Panc1 (cell line): ENCODE measurements at regions of chr14 and their contacts with region 1.

Region 1: GRCh38 chr14:36647824-36648753 is 13.6 kb upstream of the PAX9 start:
- DNase-seq: no peak
- ATAC-seq: peak; percentile 94
- H3K4me3 ChIP-seq: peak overlapping the region; percentile 37 to 54
- H3K27ac ChIP-seq: no peak overlapping the region
- H3K4me1 ChIP-seq: no peaks in the 10 kb centered on the region
- H3K27me3 ChIP-seq: peaks cover 4% of the 10 kb centered on the region
- CTCF ChIP-seq: peak; percentile 73

Region 2: GRCh38 chr14:36505181-36505815 is 142.8 kb before region 1 on chr14:
- CTCF ChIA-PET with region 1: no interaction called
- POLR2A ChIA-PET with region 1: no interaction called
- in situ Hi-C with region 1: no loop called
- intact Hi-C with region 1: no loop called
- DNase-seq: no peak
- ATAC-seq: no peak
- H3K4me3 ChIP-seq: no peak overlapping the region
- H3K27ac ChIP-seq: no peak overlapping the region
- H3K4me1 ChIP-seq: no peaks in the 10 kb centered on the region
- H3K27me3 ChIP-seq: peaks cover 7% of the 10 kb centered on the region
- CTCF ChIP-seq: no peak

Region 3: GRCh38 chr14:36661756-36662498 is 13.8 kb after region 1 on chr14 and contains the start of gene PAX9:
- CTCF ChIA-PET with region 1: no interaction called
- POLR2A ChIA-PET with region 1: no interaction called
- in situ Hi-C with region 1: no loop called
- intact Hi-C with region 1: no loop called
- DNase-seq: peak; percentile 74
- ATAC-seq: peak; percentile 99
- H3K4me3 ChIP-seq: peak within 1 kb of the TSS; percentile 54 to 69
- H3K27ac ChIP-seq: no peak within 1 kb of the TSS
- H3K4me1 ChIP-seq: no peaks in the 10 kb centered on the region
- H3K27me3 ChIP-seq: no peaks in the 10 kb centered on the region
- CTCF ChIP-seq: no peak
- total RNA-seq, gene PAX9: 0.82 TPM

Region 4: DNA sequence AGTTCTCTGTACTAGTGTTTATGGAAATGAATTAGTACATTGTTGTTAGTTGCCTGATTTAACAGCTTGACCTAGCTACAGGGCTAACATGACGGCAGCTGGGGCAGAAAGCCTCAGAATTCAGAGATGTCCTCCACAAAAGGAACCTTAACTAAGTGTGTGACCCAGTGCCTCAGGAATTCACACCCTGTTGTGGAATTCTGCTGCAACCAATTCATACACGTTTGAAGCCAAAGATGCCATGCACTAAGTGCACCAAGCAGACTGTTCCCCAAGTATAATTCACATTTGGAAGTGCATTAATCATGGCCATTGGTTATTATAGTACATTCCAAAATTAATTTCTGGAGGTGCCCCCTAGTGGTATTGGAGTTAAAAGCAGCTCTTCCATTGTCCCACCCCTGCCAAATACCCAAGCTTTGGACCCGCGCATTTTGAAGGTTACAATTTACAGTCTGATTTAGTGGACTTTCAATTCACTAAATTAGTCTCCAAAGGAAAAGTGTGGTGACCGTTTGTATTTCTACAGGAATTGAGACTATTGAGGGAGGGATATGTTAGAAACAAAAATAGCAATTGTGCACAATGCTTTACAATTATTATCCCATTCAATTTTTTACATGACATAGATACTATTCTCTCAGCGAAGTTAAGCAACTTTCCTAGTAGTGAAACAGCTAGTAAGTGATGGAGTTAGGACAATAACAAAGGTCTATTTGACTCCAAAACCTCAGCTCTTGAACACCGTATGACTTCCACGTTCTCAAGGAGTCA is 99.5 kb after region 1 on chr14:
- CTCF ChIA-PET with region 1: no interaction called
- POLR2A ChIA-PET with region 1: no interaction called
- in situ Hi-C with region 1: no loop called
- intact Hi-C with region 1: loop called (anchors 10 kb)
- DNase-seq: no peak
- ATAC-seq: 0 out of 2 replicates have a peak, but pooled peaks have one; percentile 51
- H3K4me3 ChIP-seq: no peak overlapping the region
- H3K27ac ChIP-seq: no peak overlapping the region
- H3K4me1 ChIP-seq: no peaks in the 10 kb centered on the region
- H3K27me3 ChIP-seq: no peaks in the 10 kb centered on the region
- CTCF ChIP-seq: peak; percentile 73

Region 5: DNA sequence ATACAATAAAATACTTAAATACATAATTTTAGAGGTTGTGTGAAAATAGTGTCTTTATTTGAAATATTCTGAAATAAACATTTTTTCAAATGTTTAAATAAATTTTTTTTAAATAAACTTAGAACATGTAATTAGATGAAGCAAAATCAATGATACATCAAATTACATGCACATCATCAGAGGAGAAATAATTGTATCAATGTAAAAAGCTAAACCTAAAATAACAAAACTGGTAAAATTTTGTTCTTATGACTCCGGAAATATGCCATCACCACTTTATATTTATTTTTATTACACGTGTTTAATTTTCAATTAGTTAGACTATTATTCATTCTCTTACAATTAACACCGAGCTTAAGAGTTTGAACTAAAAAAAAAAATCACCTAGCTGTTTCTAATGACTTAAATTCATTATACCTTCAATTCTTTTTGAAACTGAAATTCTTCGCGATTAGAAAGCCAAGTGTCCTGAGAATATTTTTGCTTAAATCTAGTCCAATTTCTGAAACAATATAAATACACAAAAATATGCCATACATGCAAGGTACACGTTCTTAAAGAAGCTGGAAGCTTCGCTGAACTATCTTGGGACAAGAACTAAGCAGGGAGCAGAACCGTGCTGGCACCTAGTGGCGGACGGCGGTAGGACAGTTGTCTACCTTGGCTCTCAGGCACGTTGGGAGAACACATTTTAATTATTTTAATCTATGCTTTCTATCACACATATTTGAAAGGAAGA is 293.9 kb after region 1 on chr14:
- CTCF ChIA-PET with region 1: interaction called, 6 read pairs
- POLR2A ChIA-PET with region 1: no interaction called
- in situ Hi-C with region 1: no loop called
- intact Hi-C with region 1: loop called (anchors 2 kb)
- DNase-seq: peak; percentile 64
- ATAC-seq: peak; percentile 87
- H3K4me3 ChIP-seq: no peak overlapping the region
- H3K27ac ChIP-seq: no peak overlapping the region
- H3K4me1 ChIP-seq: no peaks in the 10 kb centered on the region
- H3K27me3 ChIP-seq: no peaks in the 10 kb centered on the region
- CTCF ChIP-seq: peak; percentile 93

Region 6: GRCh38 chr14:37150414-37150813 is 502.3 kb after region 1 on chr14:
- CTCF ChIA-PET with region 1: no interaction called
- POLR2A ChIA-PET with region 1: no interaction called
- in situ Hi-C with region 1: no loop called
- intact Hi-C with region 1: loop called (anchors 10 kb)
- DNase-seq: no peak
- ATAC-seq: no peak
- H3K4me3 ChIP-seq: no peak overlapping the region
- H3K27ac ChIP-seq: no peak overlapping the region
- H3K4me1 ChIP-seq: no peaks in the 10 kb centered on the region
- H3K27me3 ChIP-seq: no peaks in the 10 kb centered on the region
- CTCF ChIP-seq: peak; percentile 63; the same call in 1 of the 2 replicates